ENCODE measurements at regions of chr10 and their contacts with region 1.

Region 1: DNA sequence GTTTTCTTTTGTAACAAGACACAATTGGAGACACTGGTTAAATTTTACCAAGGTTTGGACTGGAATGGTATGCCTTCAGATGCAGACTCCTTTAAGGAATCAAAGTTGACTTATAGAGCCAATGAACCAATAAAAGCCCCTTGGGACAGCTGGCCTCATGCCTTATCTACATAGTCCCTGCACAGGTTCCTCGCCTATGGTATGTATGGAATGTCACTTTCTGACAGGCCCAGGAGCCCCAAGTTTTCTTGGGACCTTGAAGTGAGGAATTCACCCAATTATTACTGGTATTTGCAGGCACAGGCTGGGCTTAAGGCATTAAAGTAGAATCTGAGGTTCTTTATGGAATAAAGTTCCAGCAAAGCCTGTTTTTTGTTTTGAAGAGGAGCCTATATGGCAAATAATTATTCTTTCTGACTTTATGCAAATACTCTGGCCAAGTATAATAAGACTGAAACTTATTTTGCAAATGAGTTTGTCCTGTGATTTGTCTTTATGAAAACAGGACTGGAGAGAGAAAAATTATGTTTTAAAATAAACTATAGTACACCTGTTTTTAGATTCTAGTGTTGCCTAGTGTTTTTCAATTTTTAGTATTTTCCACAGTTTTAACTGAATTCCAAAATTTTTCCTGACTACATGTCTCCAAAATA is 24.1 kb upstream of the DNMBP start:
- DNase-seq: no peak
- H3K4me3 ChIP-seq: no peak overlapping the region
- H3K27ac ChIP-seq: no peak overlapping the region
- H3K4me1 ChIP-seq: peaks cover 0 to 5% (median 3%) of the 10 kb centered on the region in 4 experiments; a peak in 4 of 7 replicates
- H3K27me3 ChIP-seq: no peaks in the 10 kb centered on the region
- CTCF ChIP-seq: no peak
- EP300 ChIP-seq: no peak
- POLR2A ChIP-seq: no peak
- RAD21 ChIP-seq: no peak

Region 2: GRCh38 chr10:100020142-100020885 is 13.6 kb before region 1 on chr10:
- CTCF ChIA-PET with region 1: interaction called, 13 read pairs
- POLR2A ChIA-PET with region 1: no interaction called
- DNase-seq: no peak
- H3K4me3 ChIP-seq: no peak overlapping the region
- H3K27ac ChIP-seq: no peak overlapping the region
- H3K4me1 ChIP-seq: peaks cover 0 to 7% (median 1%) of the 10 kb centered on the region in 4 experiments; a peak in 5 of 7 replicates
- H3K27me3 ChIP-seq: no peaks in the 10 kb centered on the region
- CTCF ChIP-seq: no peak
- EP300 ChIP-seq: no peak
- POLR2A ChIP-seq: no peak
- RAD21 ChIP-seq: no peak

Measured in H1 (cell line).